Posterior vena cava (tissue), 2 donors: ENCODE measurements at regions of chr11 and their contacts with region 1.

Region 1: GRCh38 chr11:74853223-74853622 is 95.7 kb downstream of the XRRA1 start:
- DNase-seq: no peak

Region 2: GRCh38 chr11:74824285-74824982 is 28.8 kb before region 1 on chr11:
- intact Hi-C with region 1: loop called in 1 of 2 experiments (anchors 2 kb)
- DNase-seq: no peak

Region 3: GRCh38 chr11:74895340-74896116 is 42.3 kb after region 1 on chr11:
- intact Hi-C with region 1: no loop called
- DNase-seq: no peak